ENCODE measurements at regions of chr6 and their contacts with region 1.

Region 1: GRCh38 chr6:88780714-88781389 is 182.6 kb downstream of the RNGTT start:
- DNase-seq: peak; percentile 51 to 69
- H3K4me3 ChIP-seq: no peak overlapping the region
- H3K4me3 Mint-ChIP-seq: no peak overlapping the region
- H3K27ac Mint-ChIP-seq: no peak overlapping the region
- H3K4me1 ChIP-seq: no peaks in the 10 kb centered on the region
- H3K4me1 Mint-ChIP-seq: no peaks in the 10 kb centered on the region
- H3K27me3 ChIP-seq: no peaks in the 10 kb centered on the region
- H3K27me3 Mint-ChIP-seq: no peaks in the 10 kb centered on the region
- CTCF ChIP-seq: peak; percentile 77 to 84

Region 2: GRCh38 chr6:88761237-88762031 is 19.4 kb before region 1 on chr6:
- CTCF ChIA-PET with region 1: no interaction called
- POLR2A ChIA-PET with region 1: no interaction called
- intact Hi-C with region 1: no loop called
- DNase-seq: no peak
- H3K4me3 ChIP-seq: no peak overlapping the region
- H3K4me3 Mint-ChIP-seq: no peak overlapping the region
- H3K27ac Mint-ChIP-seq: no peak overlapping the region
- H3K4me1 ChIP-seq: no peaks in the 10 kb centered on the region
- H3K4me1 Mint-ChIP-seq: no peaks in the 10 kb centered on the region
- H3K27me3 ChIP-seq: no peaks in the 10 kb centered on the region
- H3K27me3 Mint-ChIP-seq: no peaks in the 10 kb centered on the region
- CTCF ChIP-seq: peak; percentile 20 to 24

Region 3: GRCh38 chr6:88870717-88871330 is 90.0 kb after region 1 on chr6:
- CTCF ChIA-PET with region 1: no interaction called
- POLR2A ChIA-PET with region 1: no interaction called
- intact Hi-C with region 1: loop called (anchors 1 kb)
- DNase-seq: peak in 1 of 2 experiments; percentile 51
- H3K4me3 ChIP-seq: no peak overlapping the region
- H3K4me3 Mint-ChIP-seq: no peak overlapping the region
- H3K27ac Mint-ChIP-seq: no peak overlapping the region
- H3K4me1 ChIP-seq: 0 out of 2 replicates have a peak, but pooled peaks cover 3% of the 10 kb centered on the region
- H3K4me1 Mint-ChIP-seq: peaks cover 12% of the 10 kb centered on the region
- H3K27me3 ChIP-seq: no peaks in the 10 kb centered on the region
- H3K27me3 Mint-ChIP-seq: no peaks in the 10 kb centered on the region
- CTCF ChIP-seq: peak; percentile 46 to 56

Measured in Caco-2 (cell line).